Activated CD4-positive, alpha-beta memory T cell treated with anti-CD3 and anti-CD28 coated beads for 36 hours (primary cell): ENCODE measurements at regions of chr3 and their contacts with region 1.

Region 1: GRCh38 chr3:58433400-58434169 is at the start of gene PDHB:
- DNase-seq: peak; percentile 93
- H3K4me3 Mint-ChIP-seq: peak within 1 kb of the TSS; percentile 92
- H3K27ac Mint-ChIP-seq: peak within 1 kb of the TSS; percentile 91
- H3K4me1 Mint-ChIP-seq: peaks cover 24% of the 10 kb centered on the region
- H3K27me3 Mint-ChIP-seq: no peaks in the 10 kb centered on the region
- total RNA-seq, gene PDHB: 55.6 to 56.3 TPM

Region 2: GRCh38 chr3:57815036-57815435 is 618.5 kb before region 1 on chr3:
- CTCF ChIA-PET with region 1: no interaction called
- POLR2A ChIA-PET with region 1: no interaction called
- intact Hi-C with region 1: no loop called
- DNase-seq: peak; percentile 50
- H3K4me3 Mint-ChIP-seq: no peak overlapping the region
- H3K27ac Mint-ChIP-seq: no peak overlapping the region
- H3K4me1 Mint-ChIP-seq: peaks cover 38% of the 10 kb centered on the region
- H3K27me3 Mint-ChIP-seq: no peaks in the 10 kb centered on the region

Region 3: GRCh38 chr3:58324391-58325390 is 108.9 kb before region 1 on chr3:
- CTCF ChIA-PET with region 1: interaction called, 4 read pairs
- POLR2A ChIA-PET with region 1: interaction called, 3 read pairs
- intact Hi-C with region 1: loop called (anchors 1 kb)
- DNase-seq: no peak
- H3K4me3 Mint-ChIP-seq: peak overlapping the region; percentile 34
- H3K27ac Mint-ChIP-seq: peak overlapping the region; percentile 93
- H3K4me1 Mint-ChIP-seq: peaks cover 37% of the 10 kb centered on the region
- H3K27me3 Mint-ChIP-seq: no peaks in the 10 kb centered on the region

Region 4: GRCh38 chr3:58463181-58463941 is 29.8 kb after region 1 on chr3:
- CTCF ChIA-PET with region 1: interaction called, 13 read pairs
- POLR2A ChIA-PET with region 1: no interaction called
- intact Hi-C with region 1: loop called (anchors 1 kb)
- DNase-seq: peak; percentile 90
- H3K4me3 Mint-ChIP-seq: no peak overlapping the region
- H3K27ac Mint-ChIP-seq: peak overlapping the region; percentile 54
- H3K4me1 Mint-ChIP-seq: peaks cover 17% of the 10 kb centered on the region
- H3K27me3 Mint-ChIP-seq: no peaks in the 10 kb centered on the region

Region 5: GRCh38 chr3:58474348-58474911 is 40.8 kb after region 1 on chr3:
- CTCF ChIA-PET with region 1: no interaction called
- POLR2A ChIA-PET with region 1: no interaction called
- intact Hi-C with region 1: no loop called
- DNase-seq: no peak
- H3K4me3 Mint-ChIP-seq: no peak overlapping the region
- H3K27ac Mint-ChIP-seq: no peak overlapping the region
- H3K4me1 Mint-ChIP-seq: peaks cover 34% of the 10 kb centered on the region
- H3K27me3 Mint-ChIP-seq: no peaks in the 10 kb centered on the region

Region 6: GRCh38 chr3:58491506-58492402 is 58.2 kb after region 1 on chr3 and contains the start of gene KCTD6:
- CTCF ChIA-PET with region 1: interaction called, 6 read pairs
- POLR2A ChIA-PET with region 1: no interaction called
- intact Hi-C with region 1: loop called (anchors 1 kb)
- DNase-seq: peak; percentile 90
- H3K4me3 Mint-ChIP-seq: peak within 1 kb of the TSS; percentile 90
- H3K27ac Mint-ChIP-seq: peak within 1 kb of the TSS; percentile 77
- H3K4me1 Mint-ChIP-seq: peaks cover 52% of the 10 kb centered on the region
- H3K27me3 Mint-ChIP-seq: peaks cover 3% of the 10 kb centered on the region
- total RNA-seq, gene KCTD6: 8.0 to 8.6 TPM

Region 7: GRCh38 chr3:58540176-58540863 is 106.7 kb after region 1 on chr3:
- CTCF ChIA-PET with region 1: no interaction called
- POLR2A ChIA-PET with region 1: no interaction called
- intact Hi-C with region 1: no loop called
- DNase-seq: no peak
- H3K4me3 Mint-ChIP-seq: no peak overlapping the region
- H3K27ac Mint-ChIP-seq: no peak overlapping the region
- H3K4me1 Mint-ChIP-seq: no peaks in the 10 kb centered on the region
- H3K27me3 Mint-ChIP-seq: no peaks in the 10 kb centered on the region